ENCODE measurements at regions of chr11 and their contacts with region 1.

Region 1: DNA sequence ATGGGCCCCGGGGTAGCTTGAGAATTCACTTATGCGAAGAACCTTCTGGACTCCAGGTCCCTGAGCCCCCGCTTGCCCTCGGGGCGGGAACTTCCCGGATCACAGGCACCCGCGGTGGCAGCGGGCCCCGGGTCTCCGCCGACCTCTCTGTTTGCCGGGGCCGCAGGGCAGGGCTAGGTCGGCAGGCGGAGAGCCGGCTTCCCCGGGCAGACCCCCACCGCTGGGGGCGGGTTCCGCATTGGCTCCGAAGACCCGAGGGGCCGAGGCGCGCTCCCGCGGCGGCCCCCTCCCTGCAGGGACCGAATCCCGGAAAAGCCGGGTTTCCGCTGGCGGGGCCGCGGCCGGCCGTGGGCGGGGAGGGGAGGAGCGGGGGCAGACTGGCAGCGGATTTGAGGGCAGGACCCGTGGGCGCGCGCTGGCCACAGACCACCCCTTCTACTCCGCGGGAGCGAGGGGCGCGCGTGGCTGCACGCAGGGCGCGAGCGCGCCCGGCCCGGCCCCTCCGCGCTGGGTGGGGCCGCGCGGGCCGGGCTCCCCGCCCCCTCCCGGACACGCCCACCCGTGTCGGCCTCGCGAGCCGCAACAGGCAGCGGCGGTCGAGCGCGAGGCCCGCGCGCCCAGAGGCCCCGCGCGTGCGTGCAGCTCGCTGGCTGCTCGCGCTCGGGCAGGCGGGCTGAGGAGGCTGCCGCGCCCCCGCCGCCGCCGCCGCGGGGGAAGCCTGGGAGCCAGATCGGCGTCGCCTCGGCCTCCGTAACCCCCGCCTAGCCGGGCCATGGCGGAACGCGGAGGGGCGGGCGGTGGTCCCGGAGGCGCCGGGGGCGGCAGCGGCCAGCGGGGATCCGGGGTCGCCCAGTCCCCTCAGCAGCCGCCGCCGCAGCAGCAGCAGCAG is at the start of gene PACS1:
- DNase-seq: peak; percentile 95
- H3K4me3 Mint-ChIP-seq: peak within 1 kb of the TSS; percentile 94
- H3K27ac Mint-ChIP-seq: peak within 1 kb of the TSS; percentile 92
- H3K4me1 Mint-ChIP-seq: peaks cover 53% of the 10 kb centered on the region
- H3K27me3 Mint-ChIP-seq: no peaks in the 10 kb centered on the region
- total RNA-seq, gene PACS1: 90.9 and 96.7 TPM in 2 replicates

Region 2: DNA sequence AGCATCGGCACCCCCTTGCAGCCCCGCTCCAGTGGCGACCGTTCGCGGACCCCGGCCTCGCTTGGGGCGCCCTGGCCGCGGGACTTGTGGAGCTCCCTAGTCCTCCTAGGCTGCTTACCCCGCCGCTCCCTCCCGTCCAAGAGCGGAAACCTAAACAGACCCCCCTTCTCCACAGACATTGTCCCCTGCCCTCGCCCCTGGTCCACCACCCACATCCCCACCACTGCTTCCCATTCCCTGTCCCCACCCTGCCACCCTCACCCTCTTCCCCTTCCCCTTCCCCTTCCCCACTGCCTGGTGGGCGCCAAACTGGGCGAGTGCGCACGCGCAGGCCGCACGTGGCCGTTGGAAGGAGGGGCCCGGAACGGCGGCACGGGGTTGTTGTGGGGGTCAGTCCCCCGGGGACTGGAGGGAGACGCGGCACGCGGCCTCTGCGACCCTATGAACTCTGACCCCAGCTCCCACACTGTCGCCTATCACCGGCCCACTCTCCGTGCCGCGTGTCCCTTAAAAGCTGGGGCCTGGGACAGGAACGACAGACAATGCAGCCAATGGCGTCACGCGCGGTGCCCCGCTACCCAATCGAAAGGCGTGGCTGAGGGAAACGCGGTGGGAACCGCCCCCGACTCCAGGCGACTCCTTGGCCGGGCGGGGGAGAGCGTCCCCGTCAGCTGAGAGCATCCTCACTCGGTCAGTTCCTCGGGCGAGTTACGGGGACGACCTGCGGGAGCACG is 236.5 kb before region 1 on chr11 and contains the start of gene SNX32:
- intact Hi-C with region 1: no loop called
- DNase-seq: peak; percentile 99
- H3K4me3 Mint-ChIP-seq: no peak within 1 kb of the TSS
- H3K27ac Mint-ChIP-seq: no peak within 1 kb of the TSS
- H3K4me1 Mint-ChIP-seq: peaks cover 21% of the 10 kb centered on the region
- H3K27me3 Mint-ChIP-seq: peaks cover 20% of the 10 kb centered on the region
- total RNA-seq, gene SNX32: 1.2 and 2.1 TPM in 2 replicates

Region 3: DNA sequence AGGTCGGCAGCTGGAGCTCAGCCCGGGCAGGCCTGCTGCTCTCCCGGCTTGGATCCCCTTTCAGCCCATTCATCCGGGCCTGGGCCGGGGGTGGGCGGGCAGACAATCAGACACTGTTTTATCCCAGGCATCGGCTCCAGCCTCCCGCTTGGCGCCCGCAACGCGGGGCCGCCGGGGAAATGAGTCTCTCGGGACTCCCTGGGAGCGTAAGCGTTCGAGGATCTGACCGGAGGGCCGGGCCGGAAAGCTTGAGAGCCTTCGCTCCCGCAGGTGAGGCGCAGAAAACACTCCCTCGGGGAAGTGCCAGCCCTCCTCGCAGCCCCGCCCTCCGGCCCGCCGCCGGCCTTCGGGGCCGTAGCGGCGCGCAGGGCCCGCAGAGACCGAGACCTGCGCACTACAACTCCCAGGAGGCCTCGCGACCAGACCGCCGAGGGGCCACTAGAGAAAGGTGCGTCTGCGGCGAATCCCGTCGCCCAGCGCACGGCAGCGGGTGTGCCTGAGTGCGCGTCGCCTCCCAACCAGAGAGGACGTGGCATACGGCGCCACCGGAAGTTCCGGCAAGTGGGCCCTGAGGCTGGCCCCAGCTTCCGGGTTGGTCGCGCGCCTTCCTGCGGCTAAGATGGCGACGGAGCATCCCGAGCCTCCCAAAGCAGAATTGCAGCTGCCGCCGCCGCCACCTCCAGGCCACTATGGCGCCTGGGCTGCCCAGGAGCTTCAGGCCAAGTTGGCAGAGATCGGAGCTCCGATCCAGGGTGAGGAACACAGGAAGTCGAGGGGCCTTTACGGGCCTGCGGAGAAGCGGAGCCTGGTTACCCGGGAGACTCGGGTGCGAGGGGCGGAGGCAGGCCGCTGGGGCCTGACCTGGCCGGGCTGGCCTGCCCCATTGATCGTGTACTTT is 17.9 kb before region 1 on chr11 and contains the start of gene SF3B2:
- intact Hi-C with region 1: loop called (anchors 1 kb)
- DNase-seq: peak; percentile 99
- H3K4me3 Mint-ChIP-seq: peak within 1 kb of the TSS; percentile 88
- H3K27ac Mint-ChIP-seq: peak within 1 kb of the TSS; percentile 97
- H3K4me1 Mint-ChIP-seq: peaks cover 21% of the 10 kb centered on the region
- H3K27me3 Mint-ChIP-seq: peaks cover 6% of the 10 kb centered on the region
- total RNA-seq, gene SF3B2: 283 and 284 TPM in 2 replicates

Region 4: GRCh38 chr11:66081505-66081904 is 11.5 kb after region 1 on chr11:
- intact Hi-C with region 1: loop called (anchors 1 kb)
- DNase-seq: peak; percentile 92
- H3K4me3 Mint-ChIP-seq: peak overlapping the region; percentile 83
- H3K27ac Mint-ChIP-seq: peak overlapping the region; percentile 89
- H3K4me1 Mint-ChIP-seq: peaks cover 62% of the 10 kb centered on the region
- H3K27me3 Mint-ChIP-seq: no peaks in the 10 kb centered on the region

Region 5: DNA sequence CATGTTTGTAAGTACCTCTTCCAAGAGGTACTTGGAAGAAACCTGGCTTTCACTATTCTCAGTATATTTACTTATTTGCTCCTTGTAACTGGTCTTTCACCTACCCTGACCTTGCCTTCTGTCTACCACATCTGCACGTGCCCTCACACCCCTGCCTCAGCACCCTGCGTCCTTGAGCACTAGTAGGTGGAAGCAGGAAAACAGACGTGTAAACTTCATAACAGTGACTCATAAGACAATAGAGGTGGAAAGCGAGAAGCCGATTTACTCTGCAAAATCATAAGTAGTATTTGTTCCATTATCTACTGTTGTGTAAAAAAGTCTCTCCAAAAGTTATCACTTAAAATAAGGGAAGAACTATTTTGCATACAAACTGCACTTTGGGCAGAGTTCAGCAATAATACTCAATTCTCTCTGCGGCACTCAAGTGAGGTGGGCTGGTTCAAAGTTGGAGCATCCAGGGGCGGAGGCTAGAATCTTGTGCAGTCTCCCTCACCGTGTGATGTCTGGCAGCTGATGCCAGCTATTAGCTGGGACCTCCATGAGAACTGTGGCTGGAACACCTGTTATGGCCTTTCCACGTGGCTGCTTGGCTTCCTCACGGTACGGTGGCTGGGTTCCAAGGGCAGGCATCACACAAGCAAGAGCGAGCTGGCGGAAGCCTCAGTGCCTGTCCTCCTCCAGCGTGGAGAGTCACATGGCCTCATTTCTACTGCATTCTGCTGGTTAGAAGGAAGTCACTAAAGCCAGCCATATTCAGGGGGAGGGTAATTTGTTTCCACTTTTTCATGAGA is 30.5 kb after region 1 on chr11:
- intact Hi-C with region 1: loop called (anchors 2 kb)
- DNase-seq: peak; percentile 91
- H3K4me3 Mint-ChIP-seq: peak overlapping the region; percentile 77
- H3K27ac Mint-ChIP-seq: peak overlapping the region; percentile 94
- H3K4me1 Mint-ChIP-seq: peaks cover 38% of the 10 kb centered on the region
- H3K27me3 Mint-ChIP-seq: no peaks in the 10 kb centered on the region

Region 6: DNA sequence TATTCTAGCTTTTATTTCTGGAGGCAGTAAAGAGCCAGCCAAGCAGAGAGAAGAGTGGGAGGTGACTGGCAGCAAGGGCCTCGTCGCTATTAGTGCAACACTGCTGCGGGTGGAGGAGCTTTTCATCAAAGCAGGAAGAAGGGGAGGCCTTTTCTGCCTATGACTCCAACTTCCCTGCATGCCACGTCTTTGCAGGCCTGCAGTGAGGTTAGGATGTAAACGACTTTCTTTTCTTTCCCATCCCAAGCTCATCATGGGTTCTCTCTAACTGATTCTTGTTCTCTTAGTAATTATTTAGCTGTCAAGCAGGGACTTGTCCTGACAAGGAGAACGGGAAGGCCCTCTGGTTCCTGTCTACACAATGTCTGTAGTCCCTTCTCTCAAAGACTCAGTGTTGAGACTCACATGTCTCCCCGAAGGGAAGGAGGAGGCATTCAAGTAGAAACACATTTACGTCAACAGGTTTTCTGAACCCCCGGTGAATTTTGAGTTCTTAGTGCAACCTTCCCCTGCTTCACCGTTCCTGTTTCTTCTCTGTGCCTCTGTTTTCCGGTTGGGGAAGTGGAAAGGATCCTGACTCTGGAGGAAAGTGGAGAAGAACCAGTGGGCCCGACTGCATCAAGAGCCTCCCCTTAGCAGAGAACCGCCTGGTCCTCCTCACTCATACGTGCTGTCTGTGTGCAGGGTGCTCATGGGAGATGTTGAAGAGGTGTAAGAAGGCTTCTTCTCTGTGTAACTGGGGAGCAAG is 57.0 kb after region 1 on chr11:
- intact Hi-C with region 1: loop called (anchors 2 kb)
- DNase-seq: peak; percentile 85
- H3K4me3 Mint-ChIP-seq: peak overlapping the region; percentile 70
- H3K27ac Mint-ChIP-seq: peak overlapping the region; percentile 96
- H3K4me1 Mint-ChIP-seq: peaks cover 49% of the 10 kb centered on the region
- H3K27me3 Mint-ChIP-seq: no peaks in the 10 kb centered on the region

Region 7: DNA sequence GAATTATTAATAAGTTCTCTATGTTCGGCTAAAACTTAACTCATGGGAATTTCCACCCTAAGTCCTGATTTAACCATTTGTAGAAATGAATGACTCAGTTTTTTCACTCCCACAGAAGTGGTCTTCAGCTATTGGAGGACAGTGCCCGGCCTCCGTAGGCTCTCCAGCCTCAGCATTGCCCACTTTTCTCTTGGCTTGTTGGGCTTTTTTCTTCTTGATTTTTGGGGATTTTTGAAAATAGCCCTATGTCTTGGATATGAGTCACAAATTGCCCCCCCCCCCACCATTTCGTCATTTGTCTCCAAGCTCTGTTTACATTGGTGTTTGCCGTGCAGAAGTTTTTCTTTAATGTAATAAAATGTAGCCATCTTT is 66.8 kb after region 1 on chr11:
- intact Hi-C with region 1: loop called (anchors 1 kb)
- DNase-seq: no peak
- H3K4me3 Mint-ChIP-seq: no peak overlapping the region
- H3K27ac Mint-ChIP-seq: peak overlapping the region; percentile 37
- H3K4me1 Mint-ChIP-seq: peaks cover 31% of the 10 kb centered on the region
- H3K27me3 Mint-ChIP-seq: no peaks in the 10 kb centered on the region

Region 8: GRCh38 chr11:66559142-66559865 is 489.3 kb after region 1 on chr11:
- intact Hi-C with region 1: no loop called
- DNase-seq: peak; percentile 71
- H3K4me3 Mint-ChIP-seq: no peak overlapping the region
- H3K27ac Mint-ChIP-seq: no peak overlapping the region
- H3K4me1 Mint-ChIP-seq: peaks cover 3% of the 10 kb centered on the region
- H3K27me3 Mint-ChIP-seq: peaks cover 9% of the 10 kb centered on the region

Measured in activated CD4-positive, alpha-beta T cell treated with anti-CD3 and anti-CD28 coated beads, Interleukin-2, amount 10 ng/mL, durations not matched to agents 24 days and 14 days (primary cell).